MCF 10A (cell line): ENCODE measurements at regions of chr17 and their contacts with region 1.

Region 1: GRCh38 chr17:48024937-48025906 is 12.4 kb downstream of the COPZ2 start:
- DNase-seq: peak; percentile 96
- H3K4me3 Mint-ChIP-seq: peak overlapping the region; percentile 90
- H3K27ac Mint-ChIP-seq: peak overlapping the region; percentile 100
- H3K4me1 Mint-ChIP-seq: peaks cover 40% of the 10 kb centered on the region
- H3K27me3 Mint-ChIP-seq: no peaks in the 10 kb centered on the region
- CTCF ChIP-seq: peak; percentile 77

Region 2: DNA sequence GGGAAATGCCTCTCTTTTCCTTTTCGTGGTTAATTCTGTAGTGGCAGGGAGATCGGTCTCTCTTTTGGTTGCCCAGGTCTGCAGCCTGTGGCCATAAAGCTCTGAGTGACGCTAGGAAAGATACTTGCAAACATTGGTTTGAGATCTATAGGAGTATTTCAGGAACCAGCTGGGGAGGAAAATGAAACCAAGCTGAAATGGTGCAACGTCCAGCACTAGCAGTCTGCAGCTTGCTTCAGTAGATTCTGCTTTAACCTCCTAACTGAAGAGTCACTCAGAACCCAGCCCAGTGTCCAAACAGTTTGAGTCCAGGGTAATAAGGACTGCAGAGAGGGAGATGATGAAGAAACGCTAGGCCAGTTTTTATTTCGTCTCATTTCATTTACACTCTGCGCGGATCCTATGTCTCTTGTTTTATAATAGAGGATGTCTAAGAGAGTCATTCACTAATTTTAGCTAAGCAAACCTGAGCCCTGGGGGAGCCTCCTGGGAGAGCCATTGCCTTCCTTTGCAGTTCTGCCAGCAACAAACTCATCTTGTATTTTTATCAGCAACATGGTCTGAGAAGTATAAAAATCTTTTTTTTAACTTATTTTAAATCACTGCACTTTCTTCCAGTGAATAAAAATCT is 117.2 kb before region 1 on chr17:
- CTCF ChIA-PET with region 1: no interaction called
- POLR2A ChIA-PET with region 1: no interaction called
- intact Hi-C with region 1: no loop called
- DNase-seq: no peak
- H3K4me3 Mint-ChIP-seq: no peak overlapping the region
- H3K27ac Mint-ChIP-seq: no peak overlapping the region
- H3K4me1 Mint-ChIP-seq: peaks cover 20% of the 10 kb centered on the region
- H3K27me3 Mint-ChIP-seq: no peaks in the 10 kb centered on the region
- CTCF ChIP-seq: no peak

Region 3: GRCh38 chr17:47949136-47949759 is 76.0 kb before region 1 on chr17:
- CTCF ChIA-PET with region 1: interaction called, 131 read pairs
- POLR2A ChIA-PET with region 1: interaction called, 4 read pairs
- intact Hi-C with region 1: loop called (anchors 1 kb)
- DNase-seq: peak; percentile 86
- H3K4me3 Mint-ChIP-seq: peak overlapping the region; percentile 49
- H3K27ac Mint-ChIP-seq: peak overlapping the region; percentile 21
- H3K4me1 Mint-ChIP-seq: peaks cover 14% of the 10 kb centered on the region
- H3K27me3 Mint-ChIP-seq: no peaks in the 10 kb centered on the region
- CTCF ChIP-seq: peak; percentile 86

Region 4: GRCh38 chr17:48047741-48048383 is 22.6 kb after region 1 on chr17 and contains the start of gene NFE2L1:
- CTCF ChIA-PET with region 1: interaction called, 61 read pairs
- POLR2A ChIA-PET with region 1: interaction called, 220 read pairs
- intact Hi-C with region 1: loop called (anchors 1 kb)
- DNase-seq: peak; percentile 100
- H3K4me3 Mint-ChIP-seq: peak within 1 kb of the TSS; percentile 91
- H3K27ac Mint-ChIP-seq: peak within 1 kb of the TSS; percentile 100
- H3K4me1 Mint-ChIP-seq: peaks cover 47% of the 10 kb centered on the region
- H3K27me3 Mint-ChIP-seq: no peaks in the 10 kb centered on the region
- CTCF ChIP-seq: no peak
- total RNA-seq, gene NFE2L1: 235 and 315 TPM in 2 replicates

Region 5: DNA sequence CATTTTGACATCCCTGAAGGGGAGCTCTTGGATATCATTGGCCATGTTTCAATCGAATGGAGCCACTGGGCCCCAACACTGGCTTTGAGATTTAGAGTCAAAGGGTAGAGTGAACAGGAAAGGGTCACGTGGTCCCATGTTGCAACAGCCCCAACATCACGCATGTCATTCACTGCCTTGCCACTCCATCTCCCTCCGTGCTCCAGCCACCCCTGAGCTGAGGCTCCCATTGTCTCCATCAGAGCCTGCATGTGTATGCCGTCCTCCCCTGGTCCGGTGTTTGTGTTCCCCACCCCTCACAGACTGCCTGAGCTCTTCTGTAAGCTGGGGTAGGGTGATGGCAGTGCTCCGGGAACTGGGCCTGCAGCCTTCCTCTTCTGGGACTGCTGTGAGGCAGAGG is 35.0 kb after region 1 on chr17:
- CTCF ChIA-PET with region 1: interaction called, 42 read pairs
- POLR2A ChIA-PET with region 1: interaction called, 74 read pairs
- intact Hi-C with region 1: no loop called
- DNase-seq: no peak
- H3K4me3 Mint-ChIP-seq: no peak overlapping the region
- H3K27ac Mint-ChIP-seq: peak overlapping the region; percentile 64
- H3K4me1 Mint-ChIP-seq: peaks cover 40% of the 10 kb centered on the region
- H3K27me3 Mint-ChIP-seq: no peaks in the 10 kb centered on the region
- CTCF ChIP-seq: no peak

Region 6: GRCh38 chr17:48074315-48075081 is 49.3 kb after region 1 on chr17:
- CTCF ChIA-PET with region 1: interaction called, 202 read pairs
- POLR2A ChIA-PET with region 1: interaction called, 74 read pairs
- intact Hi-C with region 1: loop called (anchors 1 kb)
- DNase-seq: peak; percentile 83
- H3K4me3 Mint-ChIP-seq: no peak overlapping the region
- H3K27ac Mint-ChIP-seq: peak overlapping the region; percentile 42
- H3K4me1 Mint-ChIP-seq: peaks cover 9% of the 10 kb centered on the region
- H3K27me3 Mint-ChIP-seq: no peaks in the 10 kb centered on the region
- CTCF ChIP-seq: peak; percentile 54

Region 7: DNA sequence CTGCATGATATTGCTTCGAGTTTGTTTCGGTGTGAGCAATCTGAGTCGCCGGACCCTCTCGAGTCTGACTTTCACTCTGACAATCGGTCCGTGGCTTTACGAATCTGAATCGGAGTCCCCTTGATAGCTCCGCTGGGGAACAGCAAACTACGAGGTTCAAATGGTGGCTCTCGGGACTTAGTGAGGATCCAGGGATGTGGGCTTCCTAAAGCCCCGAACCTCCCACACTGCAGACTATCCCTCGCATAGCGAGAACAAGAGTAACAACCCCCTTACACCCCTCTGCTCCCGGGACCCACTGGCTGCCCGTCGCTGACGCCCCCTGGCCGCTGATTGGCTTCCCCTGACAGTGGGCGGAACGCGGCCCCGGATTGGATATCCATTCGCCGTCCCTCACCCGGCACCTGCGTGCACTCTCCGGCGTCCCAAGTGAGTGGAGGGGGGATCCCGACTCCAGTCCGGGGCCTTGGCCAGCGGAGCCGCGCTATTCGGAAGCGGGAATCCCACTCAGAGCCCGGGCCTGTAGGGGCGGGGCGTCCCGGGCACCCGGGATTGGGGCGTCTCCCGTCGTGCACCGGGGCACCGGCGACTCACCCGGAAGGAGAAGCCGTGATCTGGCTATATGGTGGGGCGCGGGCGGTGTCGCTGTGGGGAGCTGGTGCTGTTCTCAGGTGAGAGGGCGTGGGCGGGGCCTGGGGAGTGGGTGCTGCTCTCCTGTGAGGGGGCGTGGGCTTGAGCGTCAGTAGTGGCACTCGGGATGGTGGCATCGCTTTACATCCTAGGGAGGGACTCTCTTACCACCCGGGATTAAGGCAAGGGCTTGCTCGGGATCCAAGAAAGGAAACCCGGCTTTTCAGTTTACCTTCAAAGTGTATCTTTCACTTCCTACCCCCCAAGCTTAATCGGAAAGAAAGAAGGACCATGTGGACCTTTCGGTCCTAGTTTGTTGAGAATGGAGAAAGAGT is 82.2 kb after region 1 on chr17 and contains the start of gene SNX11:
- CTCF ChIA-PET with region 1: interaction called, 16 read pairs
- POLR2A ChIA-PET with region 1: interaction called, 59 read pairs
- intact Hi-C with region 1: no loop called
- DNase-seq: peak; percentile 85
- H3K4me3 Mint-ChIP-seq: peak within 1 kb of the TSS; percentile 98
- H3K27ac Mint-ChIP-seq: peak within 1 kb of the TSS; percentile 87
- H3K4me1 Mint-ChIP-seq: peaks cover 21% of the 10 kb centered on the region
- H3K27me3 Mint-ChIP-seq: no peaks in the 10 kb centered on the region
- CTCF ChIP-seq: no peak
- total RNA-seq, gene SNX11: 21.7 and 24.2 TPM in 2 replicates

Region 8: DNA sequence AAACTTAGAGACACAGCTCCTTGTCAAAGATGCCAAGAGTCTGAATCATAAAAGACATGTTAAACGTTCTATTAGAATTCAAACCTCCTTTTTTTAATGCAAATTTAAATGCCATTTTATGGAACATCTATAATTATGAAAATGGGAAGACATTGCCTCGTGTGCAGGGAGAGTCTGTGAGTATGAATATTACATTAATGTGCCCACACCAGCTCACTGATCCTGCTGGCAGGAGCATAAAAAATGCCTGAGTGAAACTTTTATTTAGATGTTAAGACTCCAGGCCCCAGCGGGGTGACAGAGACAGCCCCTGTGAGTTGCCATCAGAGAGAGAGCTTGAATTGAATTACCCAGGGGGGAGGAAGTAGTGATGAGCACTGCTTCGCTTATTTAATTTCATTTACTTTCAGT is 167.1 kb after region 1 on chr17:
- CTCF ChIA-PET with region 1: no interaction called
- POLR2A ChIA-PET with region 1: no interaction called
- intact Hi-C with region 1: no loop called
- DNase-seq: no peak
- H3K4me3 Mint-ChIP-seq: no peak overlapping the region
- H3K27ac Mint-ChIP-seq: no peak overlapping the region
- H3K4me1 Mint-ChIP-seq: no peaks in the 10 kb centered on the region
- H3K27me3 Mint-ChIP-seq: peaks cover 96% of the 10 kb centered on the region
- CTCF ChIP-seq: no peak

Region 9: GRCh38 chr17:48618256-48618897 is 593.2 kb after region 1 on chr17:
- CTCF ChIA-PET with region 1: interaction called, 4 read pairs
- POLR2A ChIA-PET with region 1: no interaction called
- intact Hi-C with region 1: loop called (anchors 1 kb)
- DNase-seq: peak; percentile 77
- H3K4me3 Mint-ChIP-seq: no peak overlapping the region
- H3K27ac Mint-ChIP-seq: no peak overlapping the region
- H3K4me1 Mint-ChIP-seq: peaks cover 4% of the 10 kb centered on the region
- H3K27me3 Mint-ChIP-seq: peaks cover 100% of the 10 kb centered on the region
- CTCF ChIP-seq: peak; percentile 89